ENCODE measurements at regions of chr1 and their contacts with region 1.

Region 1: GRCh38 chr1:235093696-235094592 is 34.7 kb downstream of the TOMM20 start:
- DNase-seq: peak in 9 of 10 donors; percentile 73 to 96 (median 82)

Region 2: GRCh38 chr1:234486498-234487448 is 607.2 kb before region 1 on chr1:
- intact Hi-C with region 1: loop called (anchors 5 kb)
- DNase-seq: peak in 6 of 10 donors; percentile 37 to 82 (median 52)

Measured in posterior cingulate gyrus (tissue), 11 donors.